ENCODE measurements at regions of chr4 and their contacts with region 1.

Region 1: DNA sequence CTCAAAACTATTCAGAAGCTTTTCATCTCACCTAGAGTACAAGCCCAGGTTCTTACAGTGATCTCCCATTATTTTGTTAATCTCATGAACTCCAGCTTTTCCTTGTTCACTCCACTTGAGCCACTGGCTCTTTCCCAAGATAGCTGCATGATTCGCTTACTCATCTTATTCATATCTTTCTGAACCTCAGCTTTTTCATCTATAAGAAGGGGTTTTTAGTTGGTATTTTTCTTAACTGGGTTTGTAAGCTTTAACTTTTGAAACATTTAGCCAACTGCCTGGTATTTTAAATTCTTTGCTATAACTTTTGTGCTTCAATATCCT is 24.0 kb downstream of the GIMD1 start:
- DNase-seq: no peak
- CTCF ChIP-seq: no peak

Region 2: GRCh38 chr4:106273831-106274230 is 70.8 kb before region 1 on chr4:
- CTCF ChIA-PET with region 1: no interaction called
- POLR2A ChIA-PET with region 1: no interaction called
- DNase-seq: no peak
- CTCF ChIP-seq: no peak

Region 3: DNA sequence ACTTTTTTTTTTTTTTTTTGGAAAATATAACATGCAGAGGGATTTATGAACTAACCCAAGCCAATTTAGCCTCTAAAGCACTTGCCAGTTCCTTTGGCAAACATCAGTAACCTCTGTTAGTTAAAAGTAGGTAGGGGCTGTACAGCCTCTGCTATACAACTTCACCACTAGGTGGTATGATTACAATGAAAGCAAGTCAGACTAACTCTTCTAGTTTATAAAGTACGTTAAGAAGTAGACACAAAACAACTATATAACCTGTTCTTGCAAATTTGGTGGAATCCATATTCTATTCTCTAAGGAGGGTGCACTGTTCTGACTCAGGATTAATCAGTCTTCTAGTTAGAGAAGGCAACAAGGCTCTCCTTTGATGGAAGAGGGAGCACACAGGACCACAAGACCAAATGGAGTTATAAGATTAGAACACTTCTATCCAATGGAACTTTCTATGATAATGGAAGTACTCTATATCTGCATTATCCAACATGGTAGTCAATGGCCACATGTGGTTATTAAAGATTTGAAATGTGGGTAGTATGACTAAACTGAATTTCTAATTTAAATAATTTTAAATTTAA is 15.5 kb before region 1 on chr4:
- CTCF ChIA-PET with region 1: interaction called, 11 read pairs
- POLR2A ChIA-PET with region 1: no interaction called
- DNase-seq: peak; percentile 20
- CTCF ChIP-seq: peak; percentile 49